ENCODE measurements at regions of chr18 and their contacts with region 1.

Region 1: GRCh38 chr18:46657115-46657955 is at the start of gene LOXHD1:
- DNase-seq: no peak
- H3K4me3 ChIP-seq: no peak within 1 kb of the TSS
- H3K27ac ChIP-seq: no peak within 1 kb of the TSS
- H3K4me1 ChIP-seq: no peaks in the 10 kb centered on the region
- H3K27me3 ChIP-seq: no peaks in the 10 kb centered on the region
- CTCF ChIP-seq: no peak
- POLR2A ChIP-seq: no peak
- total RNA-seq, gene LOXHD1: 0.11 to 0.83 (median 0.32) TPM

Region 2: GRCh38 chr18:46281185-46282176 is 375.9 kb before region 1 on chr18:
- intact Hi-C with region 1: loop called (anchors 5 kb)
- DNase-seq: peak; percentile 78
- H3K4me3 ChIP-seq: no peak overlapping the region
- H3K27ac ChIP-seq: no peak overlapping the region
- H3K4me1 ChIP-seq: no peaks in the 10 kb centered on the region
- H3K27me3 ChIP-seq: no peaks in the 10 kb centered on the region
- CTCF ChIP-seq: peak; percentile 85 to 94 (median 92)
- POLR2A ChIP-seq: no peak

Region 3: GRCh38 chr18:46555724-46556123 is 101.6 kb before region 1 on chr18:
- intact Hi-C with region 1: loop called (anchors 2 kb)
- DNase-seq: peak; percentile 66 to 74
- H3K4me3 ChIP-seq: no peak overlapping the region
- H3K27ac ChIP-seq: no peak overlapping the region
- H3K4me1 ChIP-seq: no peaks in the 10 kb centered on the region
- H3K27me3 ChIP-seq: no peaks in the 10 kb centered on the region
- CTCF ChIP-seq: peak; percentile 53 to 83 (median 70)
- POLR2A ChIP-seq: no peak